A673 (cell line): ENCODE measurements at regions of chr16 and their contacts with region 1.

Region 1: GRCh38 chr16:11407047-11407982 is 62.1 kb downstream of the RMI2 start:
- DNase-seq: peak; percentile 82
- H3K4me3 ChIP-seq: no peak overlapping the region
- H3K27ac ChIP-seq: no peak overlapping the region
- H3K4me1 ChIP-seq: peaks cover 19% of the 10 kb centered on the region
- H3K27me3 ChIP-seq: no peaks in the 10 kb centered on the region
- CTCF ChIP-seq: peak; percentile 84

Region 2: DNA sequence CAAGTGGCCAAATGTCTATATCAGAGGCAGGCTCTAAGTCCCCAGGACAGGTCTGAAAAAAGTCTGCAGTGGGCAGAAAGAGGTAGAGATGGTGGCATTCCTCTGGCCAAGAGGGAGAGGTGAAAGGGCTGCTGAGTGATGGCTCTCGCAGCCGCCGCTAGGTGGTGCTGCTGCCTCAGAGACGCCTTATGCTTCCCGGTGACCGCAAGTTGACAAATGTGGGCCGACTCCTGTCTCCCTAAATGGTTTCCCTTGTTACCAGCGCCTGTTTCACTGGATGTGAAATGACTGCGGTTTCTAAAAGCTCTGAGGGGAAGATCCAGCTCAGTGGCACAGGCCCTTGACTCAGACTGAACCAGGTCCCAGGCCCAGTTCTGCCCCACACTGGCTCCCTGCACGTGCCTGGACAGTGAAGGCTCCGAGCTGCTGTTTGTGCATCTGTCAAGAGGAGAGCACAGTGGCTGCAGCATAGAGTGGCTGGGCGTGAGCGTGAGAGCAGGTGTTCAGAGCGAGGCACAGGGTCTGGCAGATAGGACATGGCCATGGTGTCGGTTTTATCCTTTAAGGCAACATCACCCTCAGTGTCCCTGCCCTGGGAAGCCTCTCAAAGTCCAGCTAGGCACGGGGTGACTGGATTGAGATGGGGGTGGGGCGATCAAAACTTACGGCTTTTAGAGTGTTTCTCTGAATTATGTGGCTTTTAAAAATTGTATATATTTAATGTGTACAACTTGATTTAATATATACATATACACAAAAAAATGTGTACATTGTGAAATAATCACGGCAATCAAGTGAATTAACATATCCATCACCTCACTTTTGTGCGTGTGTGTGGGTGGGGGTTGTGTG is 443.1 kb before region 1 on chr16:
- CTCF ChIA-PET with region 1: interaction called, 3 read pairs
- POLR2A ChIA-PET with region 1: no interaction called
- intact Hi-C with region 1: loop called (anchors 5 kb)
- DNase-seq: peak; percentile 83
- H3K4me3 ChIP-seq: no peak overlapping the region
- H3K27ac ChIP-seq: no peak overlapping the region
- H3K4me1 ChIP-seq: no peaks in the 10 kb centered on the region
- H3K27me3 ChIP-seq: no peaks in the 10 kb centered on the region
- CTCF ChIP-seq: peak; percentile 98

Region 3: DNA sequence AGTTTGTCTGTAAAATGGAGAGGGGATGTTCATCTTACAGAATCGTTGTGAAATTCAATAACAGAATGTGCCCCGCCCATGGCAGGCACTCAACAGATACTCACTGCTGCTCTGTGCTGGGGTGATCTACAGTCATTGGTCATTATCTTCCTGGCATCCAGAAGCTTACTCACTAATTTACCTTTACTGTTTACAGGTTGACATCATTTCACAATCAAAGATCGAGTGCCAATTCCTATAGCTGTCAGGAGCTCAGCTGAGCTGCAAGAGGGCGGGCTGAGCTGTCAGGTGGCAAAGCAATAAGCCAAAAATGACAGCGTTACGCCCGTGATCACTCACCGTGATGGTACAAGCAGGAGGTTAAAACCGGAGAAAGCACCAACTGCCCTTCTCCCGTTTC is 128.2 kb after region 1 on chr16:
- CTCF ChIA-PET with region 1: interaction called, 3 read pairs
- POLR2A ChIA-PET with region 1: no interaction called
- intact Hi-C with region 1: loop called (anchors 10 kb)
- DNase-seq: no peak
- H3K4me3 ChIP-seq: no peak overlapping the region
- H3K27ac ChIP-seq: no peak overlapping the region
- H3K4me1 ChIP-seq: no peaks in the 10 kb centered on the region
- H3K27me3 ChIP-seq: no peaks in the 10 kb centered on the region
- CTCF ChIP-seq: no peak